AG04450 (cell line): ENCODE measurements at regions of chr9 and their contacts with region 1.

Region 1: GRCh38 chr9:12719431-12719830 is 26.2 kb downstream of the TYRP1 start:
- DNase-seq: no peak
- H3K4me3 ChIP-seq: no peak overlapping the region
- H3K27ac ChIP-seq: no peak overlapping the region
- H3K27me3 ChIP-seq: no peaks in the 10 kb centered on the region
- CTCF ChIP-seq: peak; percentile 62

Region 2: DNA sequence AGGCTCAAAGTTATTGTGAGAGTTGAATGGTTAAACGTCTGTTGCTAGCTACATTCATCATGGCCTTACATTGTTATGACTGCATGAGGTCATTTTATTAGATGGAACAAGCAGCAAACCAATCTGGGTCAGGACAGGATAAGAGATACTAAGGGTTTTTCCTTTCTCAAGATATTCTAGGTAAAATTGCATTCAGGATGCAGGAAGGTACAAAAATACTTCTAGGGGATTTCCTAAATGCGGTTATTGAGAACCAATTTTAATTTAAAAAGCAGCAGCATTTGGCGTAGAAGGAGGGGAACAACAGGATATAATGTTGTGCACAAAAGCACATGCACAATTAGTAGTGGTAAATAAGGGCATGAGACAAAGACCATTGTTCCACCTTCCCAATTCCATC is 16.2 kb after region 1 on chr9:
- CTCF ChIA-PET with region 1: interaction called, 21 read pairs
- POLR2A ChIA-PET with region 1: no interaction called
- DNase-seq: no peak
- H3K4me3 ChIP-seq: no peak overlapping the region
- H3K27ac ChIP-seq: no peak overlapping the region
- H3K27me3 ChIP-seq: no peaks in the 10 kb centered on the region
- CTCF ChIP-seq: no peak

Region 3: DNA sequence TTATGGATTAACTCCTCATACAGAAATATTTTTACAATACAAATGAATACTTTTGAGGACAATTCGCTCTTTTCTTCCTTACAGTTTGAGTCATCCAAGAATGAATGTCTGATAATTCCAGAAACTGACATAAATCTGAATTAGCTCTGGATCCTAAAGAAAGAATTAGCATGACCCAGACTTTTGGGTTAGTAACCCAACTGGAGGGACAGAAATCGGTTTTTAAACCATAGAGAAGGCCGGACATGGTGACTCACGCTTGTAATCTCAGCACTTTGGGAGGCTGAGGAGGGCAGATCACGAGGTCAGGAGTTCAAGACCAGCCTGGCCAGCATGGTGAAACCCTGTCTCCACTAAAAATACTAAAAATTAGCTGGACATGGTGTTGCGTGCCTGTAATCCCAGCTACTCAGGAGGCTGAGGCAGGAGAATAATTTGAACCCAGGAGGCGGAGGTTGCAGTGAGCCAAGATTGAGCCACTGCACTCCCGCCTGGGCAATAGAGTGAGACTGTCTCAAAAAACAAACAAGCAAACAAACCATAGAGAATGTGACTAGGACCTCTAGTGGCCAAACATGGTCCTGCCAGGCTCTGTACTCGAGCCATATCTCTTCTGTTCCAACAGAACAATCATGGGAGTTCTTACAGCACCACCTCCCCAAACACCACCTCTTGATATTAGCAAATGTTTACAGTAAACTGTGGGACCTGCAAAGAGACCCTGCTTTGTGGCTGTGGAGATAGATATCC is 100.2 kb after region 1 on chr9:
- CTCF ChIA-PET with region 1: interaction called, 12 read pairs
- POLR2A ChIA-PET with region 1: interaction called, 5 read pairs
- DNase-seq: no peak
- H3K4me3 ChIP-seq: no peak overlapping the region
- H3K27ac ChIP-seq: no peak overlapping the region
- H3K27me3 ChIP-seq: no peaks in the 10 kb centered on the region
- CTCF ChIP-seq: peak; percentile 44

Region 4: DNA sequence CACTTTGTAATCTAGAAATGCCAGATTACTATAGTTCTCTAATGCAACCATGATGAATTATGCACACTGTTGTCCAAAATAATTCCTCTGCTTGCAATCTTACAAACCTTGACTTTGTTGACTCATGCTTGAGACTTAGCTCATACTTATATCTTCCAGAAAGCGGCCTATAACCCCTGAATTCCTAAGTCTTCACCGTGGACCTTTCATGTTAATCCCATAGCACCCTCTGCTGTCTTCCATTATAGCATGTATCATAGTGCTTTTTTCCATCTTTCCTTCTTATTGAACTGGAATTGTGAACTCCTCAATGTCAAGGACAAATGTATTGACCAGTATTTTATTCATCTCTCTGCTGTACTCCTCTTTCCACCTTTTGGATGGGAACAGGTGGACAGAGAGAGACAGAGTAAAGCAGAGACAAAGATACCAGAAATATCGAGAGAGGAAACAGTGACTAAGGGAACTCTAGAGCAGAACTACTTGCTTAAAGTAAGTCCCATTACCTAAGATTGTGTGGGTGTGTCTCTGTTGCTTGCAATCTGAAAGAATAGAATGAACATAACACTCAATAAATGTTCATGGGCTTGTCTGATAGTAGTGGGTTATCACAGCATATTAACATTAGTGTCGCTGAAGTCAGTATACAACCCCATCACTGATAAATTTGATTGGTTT is 165.4 kb after region 1 on chr9:
- CTCF ChIA-PET with region 1: interaction called, 102 read pairs
- POLR2A ChIA-PET with region 1: interaction called, 6 read pairs
- DNase-seq: peak; percentile 74
- H3K4me3 ChIP-seq: no peak overlapping the region
- H3K27ac ChIP-seq: no peak overlapping the region
- H3K27me3 ChIP-seq: no peaks in the 10 kb centered on the region
- CTCF ChIP-seq: peak; percentile 69

Region 5: DNA sequence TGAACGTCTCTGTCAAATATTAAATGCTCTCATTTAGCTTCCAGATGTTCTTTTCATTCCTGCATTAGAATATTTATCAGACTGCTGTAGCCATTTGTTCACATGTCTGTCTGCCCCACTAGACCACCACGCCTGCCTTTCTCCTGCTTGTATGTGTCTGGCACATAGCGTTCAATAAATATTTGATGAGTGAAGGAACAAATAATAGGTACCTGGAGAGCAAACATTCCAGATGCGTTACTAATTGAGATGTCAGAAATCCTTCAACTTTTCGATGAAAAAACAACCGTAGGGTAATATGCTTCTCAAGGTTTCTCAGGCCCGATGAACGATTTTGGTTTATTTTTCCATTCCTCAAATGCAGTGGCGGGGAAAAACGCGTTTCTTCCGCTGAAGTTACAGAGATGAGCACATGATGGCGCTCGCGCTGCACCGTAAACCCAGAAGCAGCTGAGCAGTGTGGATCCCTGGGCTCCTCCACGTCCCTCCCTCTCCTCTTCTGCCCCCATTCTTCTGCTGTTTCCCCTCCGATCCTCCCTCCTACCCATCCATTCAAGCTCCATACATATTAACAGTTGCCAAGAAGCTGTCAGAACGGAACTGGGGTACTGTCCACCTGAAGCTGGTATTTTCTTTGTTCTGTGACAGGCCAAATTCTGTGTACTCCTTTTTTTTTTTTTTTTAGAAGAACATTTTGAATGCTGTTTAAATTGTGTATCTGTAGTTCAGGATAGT is 314.7 kb after region 1 on chr9:
- CTCF ChIA-PET with region 1: interaction called, 12 read pairs
- POLR2A ChIA-PET with region 1: no interaction called
- DNase-seq: peak; percentile 13
- H3K4me3 ChIP-seq: peak overlapping the region; percentile 51
- H3K27ac ChIP-seq: no peak overlapping the region
- H3K27me3 ChIP-seq: no peaks in the 10 kb centered on the region
- CTCF ChIP-seq: peak; percentile 86